Activated B cell treated with CpG ODN at 0.5 μM for 24 hours (primary cell): ENCODE measurements at regions of chr12 and their contacts with region 1.

Region 1: GRCh38 chr12:130980939-130981742 is 27.4 kb downstream of the ADGRD1 start:
- DNase-seq: no peak
- ATAC-seq: no peak
- H3K4me3 Mint-ChIP-seq: peak overlapping the region; percentile 51
- H3K27ac Mint-ChIP-seq: peak overlapping the region; percentile 89
- H3K4me1 Mint-ChIP-seq: peaks cover 49% of the 10 kb centered on the region
- H3K27me3 Mint-ChIP-seq: no peaks in the 10 kb centered on the region
- CTCF ChIP-seq: no peak

Region 2: GRCh38 chr12:130838951-130839769 is 142.0 kb before region 1 on chr12 and contains the start of gene STX2:
- CTCF ChIA-PET with region 1: no interaction called
- POLR2A ChIA-PET with region 1: no interaction called
- intact Hi-C with region 1: loop called (anchors 1 kb)
- DNase-seq: peak; percentile 96
- ATAC-seq: peak; percentile 94
- H3K4me3 Mint-ChIP-seq: peak within 1 kb of the TSS; percentile 83
- H3K27ac Mint-ChIP-seq: peak within 1 kb of the TSS; percentile 61
- H3K4me1 Mint-ChIP-seq: peaks cover 18% of the 10 kb centered on the region
- H3K27me3 Mint-ChIP-seq: no peaks in the 10 kb centered on the region
- CTCF ChIP-seq: no peak
- total RNA-seq, gene STX2: 11.0 and 11.4 TPM in 2 replicates

Region 3: DNA sequence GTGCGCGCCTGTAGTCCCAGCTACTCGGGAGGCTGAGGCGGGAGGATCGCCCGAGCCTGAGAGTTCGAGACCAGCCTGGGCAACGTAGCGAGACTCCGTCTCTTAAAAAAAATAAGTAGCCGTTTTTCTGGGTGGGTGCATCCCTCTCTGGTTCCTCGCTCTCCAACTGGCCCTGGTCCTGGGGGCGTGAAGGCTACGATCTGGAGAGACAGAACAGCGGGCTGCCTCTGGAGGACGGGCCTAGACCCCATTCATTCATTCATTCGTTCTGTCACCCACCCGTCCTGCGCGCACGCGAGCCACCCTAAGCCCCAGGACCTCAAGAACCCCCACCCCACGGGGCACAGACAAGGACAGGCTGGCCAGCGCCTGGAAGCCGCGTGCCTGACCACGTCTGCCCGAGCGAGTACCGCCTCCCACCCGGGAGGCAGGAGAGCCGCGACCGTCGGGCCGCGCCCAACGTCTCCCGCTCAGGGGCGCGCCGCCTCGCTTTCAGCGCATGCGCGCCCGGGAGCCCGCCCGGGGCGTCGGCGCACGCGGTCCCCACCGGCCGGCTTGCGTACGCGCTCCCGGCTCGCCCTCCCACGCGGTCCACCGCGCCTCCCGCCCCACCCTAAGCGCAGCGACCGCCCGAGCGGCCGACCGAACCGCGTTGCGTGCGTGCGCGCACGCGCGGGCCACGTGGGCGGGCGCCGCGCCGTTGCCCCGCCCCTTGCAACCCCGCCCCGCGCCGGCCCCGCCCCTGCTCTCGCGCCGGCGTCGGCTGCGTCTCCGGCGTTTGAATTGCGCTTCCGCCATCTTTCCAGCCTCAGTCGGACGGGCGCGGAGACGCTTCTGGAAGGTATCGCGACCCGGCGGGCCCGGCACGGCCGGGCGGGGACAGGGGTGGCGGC is 109.6 kb before region 1 on chr12 and contains the start of gene RAN:
- CTCF ChIA-PET with region 1: interaction called, 3 read pairs
- POLR2A ChIA-PET with region 1: interaction called, 3 read pairs
- intact Hi-C with region 1: loop called (anchors 5 kb)
- DNase-seq: peak; percentile 89
- ATAC-seq: peak; percentile 79
- H3K4me3 Mint-ChIP-seq: peak within 1 kb of the TSS; percentile 92
- H3K27ac Mint-ChIP-seq: peak within 1 kb of the TSS; percentile 93
- H3K4me1 Mint-ChIP-seq: peaks cover 42% of the 10 kb centered on the region
- H3K27me3 Mint-ChIP-seq: no peaks in the 10 kb centered on the region
- CTCF ChIP-seq: no peak
- total RNA-seq, gene RAN: 748 and 757 TPM in 2 replicates

Region 4: DNA sequence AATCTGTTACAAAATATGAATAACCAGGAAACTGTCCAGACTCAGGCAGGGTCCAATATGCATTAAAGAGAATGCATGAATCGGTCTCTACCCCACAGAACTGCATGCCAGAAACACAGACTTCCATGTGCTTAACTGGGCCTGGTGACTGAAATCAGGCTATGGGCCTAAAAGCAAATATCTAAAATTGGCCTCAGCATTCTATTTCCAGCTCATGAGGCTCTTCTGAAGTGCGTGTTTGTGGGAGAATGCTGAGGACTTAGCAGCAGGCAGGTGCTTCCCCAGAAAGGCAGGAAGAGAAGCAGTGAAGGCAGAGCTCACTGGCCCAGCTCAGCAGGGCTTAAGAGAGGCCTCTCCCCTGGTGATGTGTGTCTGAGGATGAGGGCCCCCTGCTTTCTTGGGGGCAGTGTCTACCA is 21.1 kb after region 1 on chr12:
- CTCF ChIA-PET with region 1: no interaction called
- POLR2A ChIA-PET with region 1: no interaction called
- intact Hi-C with region 1: loop called (anchors 2 kb)
- DNase-seq: no peak
- ATAC-seq: no peak
- H3K4me3 Mint-ChIP-seq: no peak overlapping the region
- H3K27ac Mint-ChIP-seq: no peak overlapping the region
- H3K4me1 Mint-ChIP-seq: peaks cover 11% of the 10 kb centered on the region
- H3K27me3 Mint-ChIP-seq: no peaks in the 10 kb centered on the region
- CTCF ChIP-seq: no peak

Region 5: GRCh38 chr12:131012279-131013069 is 31.3 kb after region 1 on chr12:
- CTCF ChIA-PET with region 1: no interaction called
- POLR2A ChIA-PET with region 1: no interaction called
- intact Hi-C with region 1: no loop called
- DNase-seq: no peak
- ATAC-seq: no peak
- H3K4me3 Mint-ChIP-seq: no peak overlapping the region
- H3K27ac Mint-ChIP-seq: no peak overlapping the region
- H3K4me1 Mint-ChIP-seq: no peaks in the 10 kb centered on the region
- H3K27me3 Mint-ChIP-seq: no peaks in the 10 kb centered on the region
- CTCF ChIP-seq: no peak

Region 6: DNA sequence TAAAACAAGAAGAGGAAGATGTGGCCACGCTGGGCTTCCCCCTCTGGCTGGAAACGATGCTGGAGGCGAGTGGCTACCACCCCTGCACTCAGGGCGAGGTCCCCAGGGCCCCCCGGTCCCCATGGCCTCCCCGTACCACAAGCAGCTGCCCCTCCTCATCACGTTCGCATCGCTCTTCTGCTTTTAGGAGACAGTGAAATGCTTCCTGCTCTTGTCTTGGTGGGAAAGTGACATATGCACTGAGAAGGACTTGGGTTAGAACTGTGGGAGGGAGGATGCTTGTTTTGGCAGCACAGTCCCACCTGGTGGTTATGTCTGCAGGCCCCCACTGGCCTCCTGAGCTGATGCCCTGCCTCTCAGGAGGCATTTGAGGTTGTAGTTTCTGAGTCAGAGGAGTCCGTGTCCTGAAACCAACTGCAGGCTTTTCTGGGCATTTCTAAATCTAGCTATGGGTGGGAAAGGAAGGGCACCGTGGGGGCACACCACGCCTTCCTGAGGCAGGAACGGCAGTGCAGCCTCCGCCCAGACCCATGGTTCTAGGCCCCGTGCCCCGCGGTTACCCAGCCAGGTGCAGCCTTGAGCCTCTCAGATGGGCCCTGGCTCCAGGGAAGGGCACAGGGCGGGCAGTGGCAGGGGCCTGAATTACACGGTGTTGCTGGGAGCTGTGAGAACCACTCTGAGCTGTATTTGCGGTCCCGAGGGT is 111.9 kb after region 1 on chr12:
- CTCF ChIA-PET with region 1: no interaction called
- POLR2A ChIA-PET with region 1: no interaction called
- intact Hi-C with region 1: loop called (anchors 5 kb)
- DNase-seq: peak; percentile 18
- ATAC-seq: peak; percentile 53
- H3K4me3 Mint-ChIP-seq: peak overlapping the region; percentile 0
- H3K27ac Mint-ChIP-seq: no peak overlapping the region
- H3K4me1 Mint-ChIP-seq: peaks cover 15% of the 10 kb centered on the region
- H3K27me3 Mint-ChIP-seq: peaks cover 3% of the 10 kb centered on the region
- CTCF ChIP-seq: no peak

Region 7: DNA sequence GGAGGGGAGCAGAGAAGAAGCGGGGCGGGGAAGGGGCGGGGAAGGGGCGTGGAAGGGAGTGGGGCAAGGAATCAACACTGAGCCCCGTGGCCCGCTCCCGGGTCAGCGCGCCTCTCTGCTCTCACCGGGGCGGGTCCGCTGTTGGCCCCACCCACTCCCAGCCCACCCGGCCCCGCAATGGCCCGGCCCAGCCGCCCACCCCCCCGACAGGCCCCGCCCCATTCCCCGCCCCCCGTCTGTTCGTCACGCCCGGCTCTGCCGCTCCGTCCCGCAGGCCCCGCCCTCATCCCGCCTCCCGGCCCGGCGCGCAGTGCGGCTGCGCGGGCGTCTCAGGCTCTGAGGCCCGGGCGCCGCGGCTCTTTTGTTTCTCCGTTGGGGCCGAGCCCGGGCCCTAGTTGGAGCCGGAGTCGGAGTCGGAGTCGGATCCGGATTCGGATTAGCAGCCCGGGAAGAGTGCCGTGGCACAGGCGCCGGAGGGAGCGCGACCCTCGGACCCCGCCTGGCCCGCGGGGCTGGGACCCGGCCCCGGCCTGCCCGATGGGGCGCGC is 913.2 kb after region 1 on chr12 and contains the start of gene ULK1:
- CTCF ChIA-PET with region 1: no interaction called
- POLR2A ChIA-PET with region 1: no interaction called
- intact Hi-C with region 1: loop called (anchors 1 kb)
- DNase-seq: peak; percentile 97
- ATAC-seq: peak; percentile 86
- H3K4me3 Mint-ChIP-seq: peak within 1 kb of the TSS; percentile 82
- H3K27ac Mint-ChIP-seq: peak within 1 kb of the TSS; percentile 46
- H3K4me1 Mint-ChIP-seq: peaks cover 22% of the 10 kb centered on the region
- H3K27me3 Mint-ChIP-seq: peaks cover 3% of the 10 kb centered on the region
- CTCF ChIP-seq: no peak
- total RNA-seq, gene ULK1: 20.1 and 27.0 TPM in 2 replicates

Region 8: DNA sequence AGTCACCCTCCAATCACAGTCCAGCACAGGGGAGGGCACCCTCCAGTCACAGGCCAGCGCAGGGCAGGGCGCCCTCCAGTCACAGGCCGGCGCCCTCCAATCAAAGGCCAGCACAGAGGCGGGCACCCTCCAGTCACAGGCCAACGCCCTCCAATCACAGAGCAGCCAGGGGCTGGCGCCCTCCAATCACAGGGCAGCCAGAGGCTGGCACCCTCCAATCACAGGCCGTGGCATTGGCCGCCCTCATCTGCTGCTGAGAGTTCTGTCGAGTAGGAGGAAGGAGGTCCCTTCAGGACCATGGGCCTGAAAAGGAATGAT is 1136.4 kb after region 1 on chr12:
- CTCF ChIA-PET with region 1: no interaction called
- POLR2A ChIA-PET with region 1: no interaction called
- intact Hi-C with region 1: no loop called
- DNase-seq: no peak
- ATAC-seq: no peak
- H3K4me3 Mint-ChIP-seq: no peak overlapping the region
- H3K27ac Mint-ChIP-seq: no peak overlapping the region
- H3K4me1 Mint-ChIP-seq: no peaks in the 10 kb centered on the region
- H3K27me3 Mint-ChIP-seq: no peaks in the 10 kb centered on the region
- CTCF ChIP-seq: no peak